ENCODE measurements at regions of chr2 and their contacts with region 1.

Region 1: GRCh38 chr2:196101325-196101991 is 32.8 kb upstream of the DNAH7 start:
- DNase-seq: no peak

Region 2: GRCh38 chr2:195318440-195319111 is 782.9 kb before region 1 on chr2:
- in situ Hi-C with region 1: no loop called
- DNase-seq: peak; percentile 75

Region 3: GRCh38 chr2:195768431-195768830 is 333.0 kb before region 1 on chr2:
- in situ Hi-C with region 1: no loop called
- DNase-seq: no peak

Region 4: DNA sequence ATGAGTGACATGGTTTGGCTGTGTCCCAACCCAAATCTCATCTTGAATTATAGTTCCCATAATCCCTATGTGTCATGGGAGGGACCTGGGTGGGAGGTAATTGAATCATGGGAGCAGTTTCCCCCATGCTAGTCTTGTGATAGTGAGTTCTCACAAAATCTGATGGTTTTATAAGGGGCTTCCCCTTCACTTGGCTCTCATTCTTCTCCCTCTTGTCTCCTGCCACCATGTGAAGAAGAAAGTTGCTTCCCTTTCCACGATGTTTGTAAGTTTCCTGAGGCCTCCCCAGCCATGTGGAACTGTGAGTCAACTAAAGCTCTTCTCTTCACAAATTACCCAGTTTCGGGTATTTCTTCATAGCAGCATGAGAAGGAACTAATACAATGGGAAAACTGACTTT is 46.8 kb before region 1 on chr2:
- in situ Hi-C with region 1: no loop called
- DNase-seq: no peak

Region 5: DNA sequence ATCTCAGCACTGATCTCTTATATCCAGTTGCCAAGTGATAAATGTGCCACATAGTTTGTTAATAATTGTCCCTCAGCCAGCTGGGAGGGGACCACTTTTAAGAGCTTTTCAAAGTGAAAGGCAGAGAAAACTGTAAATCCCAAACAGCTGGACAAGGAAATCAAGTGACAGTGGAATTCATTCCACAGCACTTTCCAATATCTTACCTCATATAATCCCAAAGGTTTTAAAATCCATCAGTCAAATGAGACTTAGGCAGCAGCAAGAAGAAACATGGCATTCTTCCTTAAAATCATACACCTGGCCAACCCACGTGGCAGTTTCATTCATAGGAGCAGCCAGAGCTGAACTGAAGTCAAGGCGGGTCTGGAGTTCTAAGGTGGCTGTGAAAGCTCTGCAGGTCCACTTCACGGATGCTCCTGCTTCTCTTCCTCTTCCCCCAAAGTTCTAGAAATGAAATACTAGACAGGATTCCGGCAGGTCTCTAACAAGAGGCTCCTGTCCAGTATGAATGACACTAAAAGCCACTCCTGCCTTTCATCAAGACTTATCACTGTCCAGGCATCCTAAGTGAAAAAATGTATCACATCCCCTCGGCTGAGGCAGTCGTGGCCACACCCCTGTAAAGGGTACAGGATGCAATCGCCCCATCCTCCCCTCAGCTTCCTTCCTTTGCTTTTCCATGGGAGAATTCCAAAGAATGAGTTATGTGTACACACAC is 260.3 kb after region 1 on chr2:
- in situ Hi-C with region 1: no loop called
- DNase-seq: no peak

Region 6: GRCh38 chr2:196453613-196454047 is 352.2 kb after region 1 on chr2:
- in situ Hi-C with region 1: loop called (anchors 25 kb)
- DNase-seq: peak; percentile 51

Region 7: DNA sequence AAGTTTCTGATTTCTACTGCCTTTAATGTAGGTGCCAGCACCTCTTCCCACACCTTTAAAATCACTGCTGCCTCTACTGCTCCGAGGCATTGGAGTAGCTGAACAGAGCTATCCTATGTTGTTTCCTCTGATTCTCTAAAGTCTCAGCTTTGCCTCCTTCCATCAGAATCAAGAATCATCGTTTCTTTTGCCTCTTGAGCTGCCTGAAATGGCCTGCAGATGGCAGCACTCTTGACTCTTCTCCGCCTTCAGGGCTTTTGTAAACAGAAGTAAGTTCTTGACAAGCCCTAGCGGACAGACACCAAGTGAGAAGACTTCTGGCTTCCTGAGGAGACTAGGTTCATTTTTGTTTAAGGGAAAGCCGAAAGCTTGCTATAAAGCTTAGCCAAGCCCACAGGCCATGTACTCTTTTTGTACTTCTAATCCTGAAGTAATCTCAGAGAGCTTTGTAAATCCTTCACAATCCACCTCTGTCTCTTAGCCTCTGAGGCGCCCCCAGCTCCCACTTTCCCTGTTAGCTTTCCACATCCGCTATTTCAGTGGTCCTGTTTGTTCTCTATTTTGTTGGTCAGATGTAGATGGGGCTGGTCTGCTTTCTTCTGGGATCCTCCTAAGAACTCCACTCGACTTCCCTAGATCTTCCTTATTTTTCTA is 649.7 kb after region 1 on chr2:
- in situ Hi-C with region 1: loop called (anchors 25 kb)
- DNase-seq: peak; percentile 58

Measured in KBM-7 (cell line).